OCI-LY7 (cell line): ENCODE measurements at regions of chr4 and their contacts with region 1.

Region 1: GRCh38 chr4:42568610-42569207 is 88.2 kb downstream of the ATP8A1 start:
- DNase-seq: peak; percentile 84
- H3K4me3 ChIP-seq: no peak overlapping the region
- H3K27ac ChIP-seq: peak overlapping the region; percentile 10
- H3K4me1 ChIP-seq: peaks cover 10% of the 10 kb centered on the region
- CTCF ChIP-seq: peak; percentile 97

Region 2: GRCh38 chr4:41853973-41854372 is 714.7 kb before region 1 on chr4:
- CTCF ChIA-PET with region 1: no interaction called
- POLR2A ChIA-PET with region 1: no interaction called
- intact Hi-C with region 1: no loop called
- DNase-seq: no peak
- H3K4me3 ChIP-seq: no peak overlapping the region
- H3K27ac ChIP-seq: no peak overlapping the region
- H3K4me1 ChIP-seq: no peaks in the 10 kb centered on the region
- CTCF ChIP-seq: peak; percentile 50

Region 3: DNA sequence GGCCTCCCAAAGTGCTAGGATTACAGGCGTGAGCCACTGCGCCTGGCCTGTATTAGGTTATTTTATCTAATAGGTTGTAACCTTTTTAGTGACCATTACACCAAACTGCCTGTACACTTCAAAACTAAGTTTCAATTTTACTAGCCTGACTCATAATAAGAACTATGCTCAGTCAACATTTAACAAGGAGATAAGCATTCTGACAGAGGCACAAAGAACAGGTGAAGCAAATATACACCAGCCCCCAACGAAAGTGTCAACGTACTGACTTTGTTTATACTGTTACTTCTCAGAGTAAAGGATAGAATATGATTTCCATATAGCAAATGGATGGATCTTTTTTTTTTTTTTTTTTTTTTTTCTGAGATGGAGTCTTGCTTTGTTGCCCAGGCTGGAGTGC is 108.7 kb before region 1 on chr4:
- CTCF ChIA-PET with region 1: no interaction called
- POLR2A ChIA-PET with region 1: no interaction called
- intact Hi-C with region 1: no loop called
- DNase-seq: no peak
- H3K4me3 ChIP-seq: no peak overlapping the region
- H3K27ac ChIP-seq: no peak overlapping the region
- H3K4me1 ChIP-seq: no peaks in the 10 kb centered on the region
- CTCF ChIP-seq: no peak

Region 4: DNA sequence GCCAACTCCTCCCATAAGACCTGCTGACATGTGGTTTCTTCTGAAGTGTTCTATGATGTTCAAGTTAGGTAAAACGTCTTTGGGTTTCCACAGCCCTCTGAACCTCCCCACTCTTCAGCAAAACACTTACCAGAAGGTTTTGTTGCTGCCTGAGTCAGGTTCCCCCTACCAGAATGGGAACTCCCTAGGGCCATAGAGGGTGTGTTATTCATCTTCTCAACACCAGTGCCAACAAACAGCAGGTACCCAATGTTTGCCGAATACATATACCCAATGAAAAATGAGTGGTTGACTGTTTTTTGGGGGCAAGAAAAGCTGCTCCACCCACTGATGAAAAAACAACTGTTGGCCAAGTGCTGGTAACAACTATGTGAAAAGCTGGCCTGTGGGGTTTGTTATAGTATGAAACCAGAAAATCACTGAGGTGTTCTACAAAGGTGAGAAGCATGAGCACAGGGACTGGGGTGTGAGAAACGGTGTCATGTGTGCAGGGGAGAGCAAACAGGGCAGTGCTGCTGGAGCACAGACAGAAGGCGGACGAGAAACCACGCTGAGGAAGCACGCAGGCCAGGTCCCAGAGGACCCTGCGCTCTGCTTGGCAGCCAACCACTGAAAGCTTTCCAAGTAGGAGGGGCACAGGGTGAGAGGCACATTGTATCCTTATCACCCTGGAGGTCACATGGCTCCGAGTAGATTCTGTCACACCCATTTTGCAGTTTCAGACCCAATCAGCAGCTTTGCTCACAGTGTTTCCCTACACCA is 59.4 kb after region 1 on chr4:
- CTCF ChIA-PET with region 1: no interaction called
- POLR2A ChIA-PET with region 1: no interaction called
- intact Hi-C with region 1: no loop called
- DNase-seq: peak; percentile 81
- H3K4me3 ChIP-seq: peak overlapping the region; percentile 44
- H3K27ac ChIP-seq: peak overlapping the region; percentile 73
- H3K4me1 ChIP-seq: peaks cover 89% of the 10 kb centered on the region
- CTCF ChIP-seq: no peak

Region 5: DNA sequence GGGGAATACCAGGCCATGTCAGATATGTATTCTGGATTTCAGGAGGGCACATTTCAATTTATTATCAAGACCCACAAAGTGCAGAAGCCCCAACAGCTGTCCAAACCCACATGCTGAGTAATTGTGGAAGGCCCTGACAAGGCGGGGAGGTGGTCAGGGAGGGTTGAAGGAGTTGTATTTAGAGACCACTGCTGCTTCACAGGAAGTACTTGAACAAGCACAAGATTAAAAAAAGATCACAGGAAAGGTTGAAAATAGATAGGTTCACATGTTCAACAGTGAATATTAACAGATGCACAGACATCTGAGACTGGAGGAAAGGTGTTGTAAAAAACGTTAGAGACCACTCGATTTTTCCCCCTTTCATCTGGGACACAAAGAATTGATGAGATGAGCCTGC is 70.3 kb after region 1 on chr4:
- CTCF ChIA-PET with region 1: interaction called, 3 read pairs
- POLR2A ChIA-PET with region 1: interaction called, 3 read pairs
- intact Hi-C with region 1: loop called (anchors 5 kb)
- DNase-seq: peak; percentile 87
- H3K4me3 ChIP-seq: peak overlapping the region; percentile 65
- H3K27ac ChIP-seq: peak overlapping the region; percentile 99
- H3K4me1 ChIP-seq: peaks cover 97% of the 10 kb centered on the region
- CTCF ChIP-seq: no peak

Region 6: GRCh38 chr4:42750091-42750490 is 181.4 kb after region 1 on chr4:
- CTCF ChIA-PET with region 1: interaction called, 3 read pairs
- POLR2A ChIA-PET with region 1: interaction called, 3 read pairs
- intact Hi-C with region 1: loop called (anchors 1 kb)
- DNase-seq: peak; percentile 60
- H3K4me3 ChIP-seq: no peak overlapping the region
- H3K27ac ChIP-seq: no peak overlapping the region
- H3K4me1 ChIP-seq: no peaks in the 10 kb centered on the region
- CTCF ChIP-seq: peak; percentile 79

Region 7: DNA sequence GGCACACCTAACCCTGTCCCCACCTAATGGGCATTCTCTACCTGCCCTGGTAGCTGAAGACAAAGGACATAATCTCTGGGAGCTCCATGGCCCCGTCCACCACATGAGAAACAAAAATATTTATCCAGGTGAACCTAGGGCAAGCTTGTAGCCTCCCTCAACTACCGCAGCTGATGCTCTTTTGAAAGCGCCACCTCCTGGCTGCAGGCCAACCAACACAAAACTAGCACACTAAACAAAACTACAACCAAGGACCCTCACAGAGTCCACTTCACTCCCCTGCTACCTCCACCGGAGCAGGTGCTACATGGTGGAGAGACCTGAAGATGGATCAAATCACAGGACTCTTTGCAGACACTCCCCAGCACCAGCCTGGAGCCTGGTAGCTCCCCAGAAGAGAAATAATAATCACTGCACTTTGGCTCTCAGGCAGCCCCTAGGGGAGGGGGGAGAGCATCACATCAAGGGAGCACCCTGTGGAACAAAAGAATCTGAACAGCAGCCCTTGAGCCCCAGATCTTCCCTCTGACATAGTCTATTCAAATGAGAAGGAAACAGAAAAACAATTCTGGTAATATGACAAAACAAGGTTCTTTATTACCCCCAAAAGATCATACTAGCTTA is 199.5 kb after region 1 on chr4:
- CTCF ChIA-PET with region 1: interaction called, 7 read pairs
- POLR2A ChIA-PET with region 1: no interaction called
- intact Hi-C with region 1: loop called (anchors 1 kb)
- DNase-seq: peak; percentile 52
- H3K4me3 ChIP-seq: no peak overlapping the region
- H3K27ac ChIP-seq: no peak overlapping the region
- H3K4me1 ChIP-seq: no peaks in the 10 kb centered on the region
- CTCF ChIP-seq: peak; percentile 83

Region 8: DNA sequence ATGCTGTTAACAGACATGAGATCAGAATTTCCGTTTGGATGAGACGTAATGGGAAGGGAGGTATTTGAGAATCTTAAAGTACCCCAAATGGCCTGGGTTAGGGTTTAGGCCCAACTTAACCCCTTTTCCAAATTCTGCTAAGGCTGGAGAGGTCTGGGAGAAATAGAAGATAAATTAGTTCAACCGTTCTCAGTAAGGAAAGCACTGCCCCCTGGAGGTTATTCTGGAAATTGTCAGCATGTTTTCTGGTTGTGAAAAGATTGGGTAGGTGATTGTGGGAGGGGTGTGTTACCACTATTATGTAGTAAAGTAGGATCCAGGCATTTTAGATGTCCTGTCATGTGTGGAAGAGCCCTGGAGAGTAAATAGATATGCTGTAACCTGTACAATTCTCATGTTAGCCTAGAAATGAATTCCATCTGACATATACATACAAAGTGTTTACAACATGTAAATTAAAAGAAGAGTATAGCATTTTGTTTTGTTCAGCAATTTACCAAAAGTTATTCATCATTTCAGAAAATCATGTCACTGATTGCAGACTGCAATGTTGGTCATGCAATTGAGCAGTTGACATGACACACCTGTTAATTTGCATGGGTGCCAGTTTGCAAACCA is 297.0 kb after region 1 on chr4:
- CTCF ChIA-PET with region 1: no interaction called
- POLR2A ChIA-PET with region 1: no interaction called
- intact Hi-C with region 1: loop called (anchors 1 kb)
- DNase-seq: peak; percentile 62
- H3K4me3 ChIP-seq: no peak overlapping the region
- H3K27ac ChIP-seq: no peak overlapping the region
- H3K4me1 ChIP-seq: no peaks in the 10 kb centered on the region
- CTCF ChIP-seq: peak; percentile 94